ENCODE measurements at regions of chr11 and their contacts with region 1.

Region 1: GRCh38 chr11:57493507-57494503 is 21.7 kb downstream of the SLC43A1 start:
- DNase-seq: peak; percentile 82
- ATAC-seq: peak; percentile 79
- H3K4me3 Mint-ChIP-seq: no peak overlapping the region
- H3K27ac Mint-ChIP-seq: peak overlapping the region; percentile 86
- H3K4me1 Mint-ChIP-seq: peaks cover 12% of the 10 kb centered on the region
- H3K27me3 Mint-ChIP-seq: no peaks in the 10 kb centered on the region

Region 2: DNA sequence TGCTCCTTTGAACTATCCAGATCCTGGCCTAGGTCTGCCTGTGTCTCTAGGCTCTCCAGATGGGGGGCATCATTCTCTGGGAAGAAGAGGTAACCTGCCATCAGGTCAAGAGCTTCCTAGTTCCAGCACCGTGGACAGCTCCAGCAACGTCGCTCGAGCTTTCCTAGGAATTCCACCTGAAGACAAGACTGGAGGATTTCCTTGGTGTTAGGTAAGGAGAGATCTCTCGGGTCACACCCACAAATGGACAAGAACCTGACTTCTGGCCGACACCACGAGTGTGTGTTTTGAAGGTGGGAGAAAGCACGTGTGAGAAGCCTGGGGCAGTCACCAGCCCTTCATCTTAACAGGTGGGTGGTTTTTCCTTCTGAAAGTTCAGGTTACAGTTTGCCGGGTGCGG is 114.1 kb before region 1 on chr11:
- CTCF ChIA-PET with region 1: no interaction called
- POLR2A ChIA-PET with region 1: no interaction called
- DNase-seq: peak; percentile 21
- ATAC-seq: no peak
- H3K4me3 Mint-ChIP-seq: no peak overlapping the region
- H3K27ac Mint-ChIP-seq: no peak overlapping the region
- H3K4me1 Mint-ChIP-seq: no peaks in the 10 kb centered on the region
- H3K27me3 Mint-ChIP-seq: peaks cover 11% of the 10 kb centered on the region

Region 3: DNA sequence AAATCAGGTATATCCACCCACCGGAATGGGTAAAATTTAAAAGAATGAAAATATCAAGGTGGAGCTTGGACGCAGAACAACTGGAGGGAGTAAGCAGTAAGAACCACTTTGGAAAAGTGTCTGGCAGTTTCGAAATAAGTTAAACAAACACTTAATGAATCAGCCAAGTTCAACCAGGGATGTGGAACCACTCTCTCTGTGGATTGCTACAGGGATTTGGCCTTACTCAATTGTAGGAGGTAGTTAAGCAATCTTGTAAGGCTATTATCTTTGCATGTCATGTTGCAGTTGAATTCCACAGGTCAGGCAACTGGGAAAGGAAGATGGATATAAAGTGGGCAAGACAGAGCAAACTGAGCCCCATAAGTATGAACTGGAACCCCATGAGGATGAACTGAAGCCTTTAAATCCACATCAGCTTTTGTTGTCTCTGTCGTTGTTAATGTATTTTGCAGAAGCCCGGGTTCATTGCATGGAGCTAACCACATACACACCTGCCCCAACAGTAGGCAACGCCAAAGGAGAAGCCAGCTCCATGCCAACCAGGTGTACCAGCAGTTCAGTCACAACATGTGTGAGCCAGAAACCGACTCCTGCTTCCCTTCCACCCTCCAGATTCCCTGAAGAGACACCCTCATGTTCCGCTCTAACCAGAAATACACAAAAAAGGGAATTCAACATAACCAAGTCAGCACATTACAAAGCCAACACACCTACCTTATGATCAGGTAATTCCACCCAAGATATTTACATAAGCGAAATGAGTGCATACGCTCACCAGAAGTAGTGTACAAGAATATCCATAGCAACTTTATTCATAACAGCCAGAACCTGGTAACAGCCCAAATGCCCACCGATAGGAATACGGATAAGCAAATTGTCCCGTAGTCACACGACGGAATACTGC is 58.9 kb before region 1 on chr11:
- CTCF ChIA-PET with region 1: interaction called, 10 read pairs
- POLR2A ChIA-PET with region 1: no interaction called
- DNase-seq: no peak
- ATAC-seq: no peak
- H3K4me3 Mint-ChIP-seq: no peak overlapping the region
- H3K27ac Mint-ChIP-seq: no peak overlapping the region
- H3K4me1 Mint-ChIP-seq: peaks cover 5% of the 10 kb centered on the region
- H3K27me3 Mint-ChIP-seq: peaks cover 7% of the 10 kb centered on the region

Region 4: DNA sequence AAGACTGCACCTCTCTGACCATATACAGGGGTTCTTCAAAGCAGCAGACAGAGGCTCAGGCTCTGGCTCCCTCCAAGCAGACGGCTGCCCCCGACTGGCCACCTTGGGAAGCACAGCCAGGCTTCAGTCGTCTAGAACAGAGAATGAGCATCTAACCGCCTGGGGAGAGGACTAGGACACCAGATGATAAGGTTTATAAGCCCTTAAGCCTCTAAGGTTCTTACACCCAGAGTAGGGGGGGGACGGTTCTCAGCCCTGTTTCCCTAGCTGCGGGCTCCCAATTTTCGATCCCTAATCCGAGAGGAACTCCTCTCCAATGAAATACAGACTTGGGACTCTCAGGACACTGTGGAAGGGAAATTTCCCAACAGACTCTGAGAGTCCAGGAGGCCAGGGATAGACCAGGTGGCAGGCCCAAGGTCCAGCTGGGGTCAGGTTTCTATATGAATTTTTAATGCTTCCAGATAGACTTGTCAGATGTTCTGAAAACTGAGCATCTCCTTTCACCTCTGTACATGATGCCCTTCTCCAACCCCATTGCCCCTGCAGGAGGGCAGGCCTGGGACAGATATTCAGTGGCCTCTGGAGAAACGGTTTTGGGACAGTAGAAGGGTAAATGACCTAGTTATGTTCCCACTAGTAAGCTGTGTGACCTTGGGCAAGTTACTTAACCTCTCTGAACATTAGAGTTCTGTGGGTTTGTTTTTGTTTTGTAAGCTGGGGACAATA is 13.2 kb before region 1 on chr11:
- CTCF ChIA-PET with region 1: interaction called, 47 read pairs
- POLR2A ChIA-PET with region 1: no interaction called
- DNase-seq: peak; percentile 87
- ATAC-seq: peak; percentile 68
- H3K4me3 Mint-ChIP-seq: no peak overlapping the region
- H3K27ac Mint-ChIP-seq: no peak overlapping the region
- H3K4me1 Mint-ChIP-seq: peaks cover 27% of the 10 kb centered on the region
- H3K27me3 Mint-ChIP-seq: peaks cover 39% of the 10 kb centered on the region

Region 5: DNA sequence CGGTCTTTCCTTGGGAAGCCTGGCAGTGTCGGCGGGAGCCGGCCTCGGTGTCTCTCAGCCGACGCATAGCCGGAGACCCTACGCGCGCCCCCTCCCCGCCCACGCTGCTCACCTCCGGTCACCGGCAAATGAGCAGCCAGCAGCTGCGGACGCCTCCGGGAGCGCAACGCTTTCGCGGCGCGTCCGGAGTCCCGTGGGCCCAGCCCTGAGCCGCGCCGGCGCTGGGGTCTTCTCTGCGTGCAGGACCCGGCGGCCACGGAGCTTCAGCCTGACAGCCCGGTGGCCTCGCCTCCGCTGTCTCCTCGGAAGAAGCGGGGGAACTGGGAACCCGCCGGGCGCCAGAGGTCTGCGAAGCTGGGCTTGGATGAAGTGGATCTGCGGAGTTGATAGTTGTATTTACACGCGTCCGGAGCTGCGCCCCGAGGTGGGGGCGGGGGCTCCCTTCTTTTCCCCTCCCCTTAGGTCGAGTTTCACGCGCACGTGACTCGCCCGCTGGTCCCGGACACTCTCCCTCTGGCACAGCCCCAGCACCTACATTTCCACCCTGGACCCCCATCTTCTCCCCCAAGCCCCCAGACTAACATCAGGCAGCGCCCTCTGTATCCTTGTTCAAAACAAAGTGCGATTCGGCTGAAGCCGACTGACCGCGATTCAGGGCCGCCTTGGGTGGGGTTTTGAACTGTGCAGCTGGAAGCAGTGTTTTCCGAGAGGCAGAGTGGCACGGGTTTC is 21.7 kb after region 1 on chr11 and contains the start of gene SLC43A1:
- CTCF ChIA-PET with region 1: interaction called, 152 read pairs
- POLR2A ChIA-PET with region 1: interaction called, 3 read pairs
- DNase-seq: peak; percentile 45
- ATAC-seq: peak; percentile 47
- H3K4me3 Mint-ChIP-seq: peak within 1 kb of the TSS; percentile 97
- H3K27ac Mint-ChIP-seq: peak within 1 kb of the TSS; percentile 91
- H3K4me1 Mint-ChIP-seq: peaks cover 32% of the 10 kb centered on the region
- H3K27me3 Mint-ChIP-seq: no peaks in the 10 kb centered on the region
- total RNA-seq, gene SLC43A1: 26.4 to 28.4 TPM

Region 6: GRCh38 chr11:57649826-57650738 is 156.3 kb after region 1 on chr11 and contains the start of gene YPEL4:
- CTCF ChIA-PET with region 1: interaction called, 38 read pairs
- POLR2A ChIA-PET with region 1: no interaction called
- DNase-seq: peak; percentile 77
- ATAC-seq: peak; percentile 76
- H3K4me3 Mint-ChIP-seq: peak within 1 kb of the TSS; percentile 71
- H3K27ac Mint-ChIP-seq: peak within 1 kb of the TSS; percentile 71
- H3K4me1 Mint-ChIP-seq: peaks cover 61% of the 10 kb centered on the region
- H3K27me3 Mint-ChIP-seq: peaks cover 42% of the 10 kb centered on the region
- total RNA-seq, gene YPEL4: 0.11 to 0.13 TPM

Measured in activated CD8-positive, alpha-beta T cell treated with anti-CD3 and anti-CD28 coated beads, Interleukin-2, amount 10 ng/mL, durations not matched to agents 7 days and 5 days (primary cell).